ENCODE measurements at regions of chr10 and their contacts with region 1.

Region 1: DNA sequence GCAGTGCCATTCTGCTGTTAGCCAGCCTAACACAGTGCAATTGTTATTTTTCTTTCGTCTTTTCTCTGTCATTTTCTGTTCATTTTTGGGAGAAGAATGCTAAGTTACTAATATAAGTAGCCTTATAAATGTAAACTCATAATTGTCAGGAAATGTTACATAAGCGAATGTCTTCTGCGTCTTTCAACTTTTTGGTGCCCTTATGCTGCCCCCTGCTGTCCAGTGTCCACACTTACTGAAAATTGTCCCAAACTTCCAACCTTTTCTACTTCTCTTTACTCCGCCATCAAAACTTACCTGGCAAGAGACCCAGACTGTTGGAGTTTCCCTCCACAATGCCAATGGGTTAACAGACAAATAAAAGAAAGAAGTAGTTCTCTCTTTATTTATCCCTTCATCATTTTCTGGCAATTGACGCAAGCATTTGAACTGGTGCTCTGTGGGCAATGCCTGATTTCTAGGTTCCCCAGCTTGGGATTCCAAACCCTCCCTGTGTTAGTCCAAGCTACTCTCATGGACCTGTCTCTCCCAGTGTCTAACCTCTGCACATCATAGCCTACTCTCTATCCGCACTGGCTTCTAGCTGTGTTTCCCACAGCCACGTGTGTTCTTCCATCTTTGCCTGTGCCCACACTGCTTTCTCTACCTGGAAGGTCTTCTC is 21.0 kb upstream of the EPC1 start:
- DNase-seq: peak; percentile 69 to 73 (median 71)
- ATAC-seq: peak; percentile 44 to 59
- H3K4me3 ChIP-seq: no peak overlapping the region
- H3K27ac ChIP-seq: no peak overlapping the region
- H3K4me1 ChIP-seq: peaks cover 2% of the 10 kb centered on the region
- H3K27me3 ChIP-seq: no peaks in the 10 kb centered on the region

Region 2: DNA sequence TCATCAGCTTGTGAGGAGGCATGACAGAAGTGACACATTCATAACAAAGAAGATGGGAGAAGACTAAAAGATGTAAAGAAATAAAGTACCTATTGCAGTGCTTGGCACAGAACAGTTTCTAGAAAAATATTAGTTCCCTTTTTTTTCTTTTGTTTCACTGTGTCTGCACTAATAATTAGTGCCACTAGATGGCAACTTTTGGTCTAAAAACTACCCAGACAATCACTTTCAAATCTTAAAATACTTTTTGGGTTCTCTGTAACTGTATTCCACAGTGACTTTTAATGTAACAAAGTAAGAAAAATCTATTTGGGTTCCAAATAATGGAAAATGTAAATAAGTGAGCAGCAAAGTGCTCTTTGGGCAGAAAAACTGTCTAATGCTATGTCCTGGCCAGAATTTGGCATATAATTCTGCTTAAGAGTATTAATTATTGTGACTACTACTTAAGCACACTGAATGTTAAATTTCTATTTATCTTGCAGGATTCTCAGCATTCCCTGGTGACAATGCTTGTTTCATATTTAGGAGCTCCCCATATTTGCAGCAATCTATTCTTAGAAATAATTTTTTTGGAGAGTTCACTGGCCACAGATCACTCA is 176.9 kb before region 1 on chr10:
- intact Hi-C with region 1: loop called in 2 of 4 experiments (anchors 5 to 10 kb)
- DNase-seq: no peak
- ATAC-seq: no peak
- H3K4me3 ChIP-seq: no peak overlapping the region
- H3K27ac ChIP-seq: no peak overlapping the region
- H3K4me1 ChIP-seq: no peaks in the 10 kb centered on the region
- H3K27me3 ChIP-seq: no peaks in the 10 kb centered on the region

Region 3: GRCh38 chr10:32256613-32257437 is 111.1 kb before region 1 on chr10:
- intact Hi-C with region 1: loop called in 2 of 4 experiments (anchors 2 to 5 kb)
- DNase-seq: peak; percentile 45 to 88 (median 78)
- ATAC-seq: peak; percentile 67 to 68
- H3K4me3 ChIP-seq: no peak overlapping the region
- H3K27ac ChIP-seq: no peak overlapping the region
- H3K4me1 ChIP-seq: no peaks in the 10 kb centered on the region
- H3K27me3 ChIP-seq: no peaks in the 10 kb centered on the region

Region 4: DNA sequence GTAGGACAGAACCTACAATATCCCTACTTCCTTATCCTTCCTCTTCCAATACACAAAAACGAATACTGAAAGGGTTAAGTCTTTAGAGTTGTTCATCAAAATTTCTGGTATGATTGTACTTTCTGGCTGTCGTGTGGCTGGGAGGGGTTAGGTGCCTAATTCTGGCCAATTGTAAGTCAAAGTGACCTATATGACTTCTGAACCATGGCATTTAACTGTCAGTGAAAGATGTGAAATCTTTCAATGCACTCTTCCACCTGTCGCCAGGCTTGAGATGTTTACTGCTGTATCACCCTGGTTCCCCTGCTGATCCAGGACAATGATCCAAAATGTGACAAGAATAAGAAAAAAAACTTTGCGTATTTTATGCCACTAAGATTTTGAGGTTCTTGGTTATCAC is 41.8 kb before region 1 on chr10:
- intact Hi-C with region 1: no loop called
- DNase-seq: no peak
- ATAC-seq: no peak
- H3K4me3 ChIP-seq: no peak overlapping the region
- H3K27ac ChIP-seq: no peak overlapping the region
- H3K4me1 ChIP-seq: peaks cover 13% of the 10 kb centered on the region
- H3K27me3 ChIP-seq: no peaks in the 10 kb centered on the region